GM13976 (cell line): ENCODE measurements at regions of chr6 and their contacts with region 1.

Region 1: GRCh38 chr6:35583893-35584688 is 71.4 kb upstream of the TULP1 start:
- DNase-seq: peak; percentile 54
- CTCF ChIP-seq: peak; percentile 71

Region 2: GRCh38 chr6:35736253-35736894 is 152.3 kb after region 1 on chr6:
- in situ Hi-C with region 1: loop called (anchors 5 kb)
- DNase-seq: peak; percentile 83
- CTCF ChIP-seq: peak; percentile 82

Region 3: GRCh38 chr6:36160147-36160760 is 576.2 kb after region 1 on chr6:
- in situ Hi-C with region 1: no loop called
- DNase-seq: no peak
- CTCF ChIP-seq: no peak